ENCODE measurements at regions of chr17 and their contacts with region 1.

Region 1: DNA sequence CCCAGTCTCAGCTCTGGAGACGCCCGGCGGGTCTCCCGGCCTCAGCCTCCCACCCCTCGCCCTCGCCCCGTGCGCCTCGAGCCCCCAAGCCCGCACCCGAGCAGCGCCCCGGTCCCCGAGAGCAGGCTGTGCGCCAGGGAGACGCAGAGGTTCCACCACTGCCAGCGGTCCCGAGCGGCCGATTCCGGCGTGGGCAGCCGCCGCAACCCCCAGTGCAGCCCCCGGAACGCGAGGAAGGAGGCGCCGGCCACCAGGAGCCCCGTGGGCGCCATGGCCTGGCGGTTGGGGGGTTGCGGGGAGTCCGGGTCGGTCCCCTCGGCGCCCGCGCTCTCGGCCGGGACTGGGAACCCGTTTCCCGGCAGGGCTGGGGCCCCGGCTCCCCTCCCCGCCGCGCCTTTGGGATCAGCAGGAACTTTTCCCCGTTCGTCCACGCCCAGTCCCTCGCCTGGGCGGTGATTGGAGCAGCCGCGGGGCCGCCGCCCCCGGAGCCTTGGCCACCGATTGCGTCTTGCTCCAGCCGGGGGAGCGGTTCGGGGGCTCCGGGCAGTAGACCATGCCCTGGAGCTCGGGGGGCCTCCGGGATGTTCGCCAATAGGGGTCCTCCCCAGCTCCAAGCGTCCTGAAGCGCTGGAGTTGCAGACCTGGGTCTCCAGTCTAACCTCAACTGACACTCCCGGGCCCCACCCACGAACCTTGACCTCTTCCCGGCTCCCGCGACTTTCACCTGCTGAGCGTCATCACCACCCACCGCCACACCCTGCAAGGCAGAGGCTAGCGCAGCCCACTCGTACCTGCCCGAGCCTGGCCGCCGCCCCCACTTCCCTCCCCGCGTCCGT is at the start of gene TLCD2:
- DNase-seq: peak; percentile 62
- ATAC-seq: peak; percentile 61
- H3K4me3 ChIP-seq: peak within 1 kb of the TSS; percentile 70
- H3K27ac ChIP-seq: peak within 1 kb of the TSS; percentile 57
- H3K4me1 ChIP-seq: peaks cover 33% of the 10 kb centered on the region
- H3K27me3 ChIP-seq: no peaks in the 10 kb centered on the region
- CTCF ChIP-seq: no peak
- total RNA-seq, gene TLCD2: 0.63 and 0.77 TPM in 2 replicates

Region 2: DNA sequence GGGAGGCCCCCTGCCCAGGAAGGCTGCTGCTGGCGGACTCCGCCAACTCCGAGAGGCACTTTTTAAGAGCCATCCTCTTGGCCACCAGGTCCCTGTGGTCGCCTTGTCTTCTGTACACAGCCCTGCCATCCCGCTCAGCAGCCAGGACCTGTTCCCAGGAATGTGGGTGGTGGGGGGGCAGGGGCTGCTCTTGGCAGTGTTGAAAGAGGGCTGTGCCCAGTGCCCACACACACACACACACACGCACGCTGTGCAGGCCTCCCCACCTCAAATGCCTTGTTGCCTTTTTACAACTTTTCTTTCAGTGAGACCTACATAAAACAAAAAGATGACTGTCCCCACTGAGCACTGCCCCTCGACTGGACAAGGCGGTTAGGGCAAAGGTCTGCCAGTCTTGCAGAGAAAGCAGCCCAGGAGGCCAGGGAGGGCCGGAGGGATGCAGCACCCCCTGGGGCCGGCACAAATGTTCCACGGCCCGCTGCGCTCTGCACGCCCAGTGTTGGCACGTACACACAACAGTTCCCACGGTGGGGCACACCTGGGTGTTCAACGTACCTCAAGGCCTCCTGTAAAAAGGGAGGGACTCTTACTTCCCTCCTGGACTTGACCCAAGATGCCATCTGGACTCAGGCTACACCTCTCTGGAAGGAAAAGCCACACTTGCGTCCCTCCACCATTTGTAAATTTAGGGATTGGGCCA is 129.1 kb before region 1 on chr17:
- CTCF ChIA-PET with region 1: no interaction called
- POLR2A ChIA-PET with region 1: no interaction called
- intact Hi-C with region 1: no loop called
- DNase-seq: no peak
- ATAC-seq: no peak
- H3K4me3 ChIP-seq: no peak overlapping the region
- H3K27ac ChIP-seq: no peak overlapping the region
- H3K4me1 ChIP-seq: peaks cover 10% of the 10 kb centered on the region
- H3K27me3 ChIP-seq: no peaks in the 10 kb centered on the region
- CTCF ChIP-seq: no peak

Region 3: GRCh38 chr17:1628856-1629646 is 81.1 kb before region 1 on chr17:
- CTCF ChIA-PET with region 1: no interaction called
- POLR2A ChIA-PET with region 1: no interaction called
- intact Hi-C with region 1: no loop called
- DNase-seq: peak; percentile 81
- ATAC-seq: peak; percentile 77
- H3K4me3 ChIP-seq: peak overlapping the region; percentile 73
- H3K27ac ChIP-seq: peak overlapping the region; percentile 51
- H3K4me1 ChIP-seq: no peaks in the 10 kb centered on the region
- H3K27me3 ChIP-seq: no peaks in the 10 kb centered on the region
- CTCF ChIP-seq: peak; percentile 28; the same call in 1 of the 2 replicates

Region 4: DNA sequence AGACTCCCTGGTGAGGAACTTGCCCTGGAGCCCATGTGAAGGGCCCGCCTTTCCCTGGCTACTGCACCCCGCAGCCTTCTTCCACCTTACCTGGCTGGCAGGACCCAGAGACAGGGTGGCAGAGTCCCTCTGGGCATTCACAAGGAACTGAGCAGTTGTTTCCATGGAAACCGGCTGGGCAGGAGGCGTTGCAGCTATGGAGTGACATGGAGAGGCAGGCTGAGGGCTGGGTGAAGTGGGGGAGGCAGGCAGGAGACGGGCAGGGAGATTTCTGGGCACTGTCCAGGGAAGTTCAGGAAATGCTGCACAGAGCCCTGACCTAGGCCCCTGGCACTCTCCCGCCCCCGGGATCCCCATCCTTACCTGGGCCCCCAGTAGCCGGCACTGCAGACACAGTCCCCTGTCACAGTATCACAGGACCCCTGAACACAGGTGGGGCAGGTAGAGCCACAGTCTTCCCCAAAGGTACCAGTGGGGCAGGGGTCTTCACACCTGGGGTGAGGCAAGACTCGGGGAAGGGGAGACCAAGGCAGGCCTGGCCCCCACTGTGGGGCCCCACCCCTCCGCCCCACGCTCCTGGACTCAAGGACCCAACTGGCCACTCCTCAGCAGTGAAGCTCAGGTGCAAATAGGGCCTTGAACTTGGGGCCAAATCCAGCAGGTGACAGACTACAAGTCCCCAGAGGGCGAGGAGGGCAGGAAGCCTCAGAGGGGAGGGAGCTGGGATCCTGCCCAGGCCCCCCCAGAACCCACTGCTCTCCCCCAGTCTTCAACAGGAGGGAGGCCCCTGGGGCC is 70.4 kb before region 1 on chr17:
- CTCF ChIA-PET with region 1: no interaction called
- POLR2A ChIA-PET with region 1: no interaction called
- intact Hi-C with region 1: no loop called
- DNase-seq: no peak
- ATAC-seq: no peak
- H3K4me3 ChIP-seq: no peak overlapping the region
- H3K27ac ChIP-seq: no peak overlapping the region
- H3K4me1 ChIP-seq: peaks cover 10% of the 10 kb centered on the region
- H3K27me3 ChIP-seq: no peaks in the 10 kb centered on the region
- CTCF ChIP-seq: no peak

Region 5: GRCh38 chr17:1684378-1685189 is 25.6 kb before region 1 on chr17 and contains the start of gene PRPF8:
- CTCF ChIA-PET with region 1: no interaction called
- POLR2A ChIA-PET with region 1: no interaction called
- intact Hi-C with region 1: loop called (anchors 2 kb)
- DNase-seq: peak; percentile 95
- ATAC-seq: peak; percentile 99
- H3K4me3 ChIP-seq: peak within 1 kb of the TSS; percentile 84
- H3K27ac ChIP-seq: peak within 1 kb of the TSS; percentile 55
- H3K4me1 ChIP-seq: peaks cover 6% of the 10 kb centered on the region
- H3K27me3 ChIP-seq: no peaks in the 10 kb centered on the region
- CTCF ChIP-seq: no peak
- total RNA-seq, gene PRPF8: 103 and 126 TPM in 2 replicates

Measured in PC-3 (cell line).